GM12878 (cell line): ENCODE measurements at regions of chr10 and their contacts with region 1.

Region 1: DNA sequence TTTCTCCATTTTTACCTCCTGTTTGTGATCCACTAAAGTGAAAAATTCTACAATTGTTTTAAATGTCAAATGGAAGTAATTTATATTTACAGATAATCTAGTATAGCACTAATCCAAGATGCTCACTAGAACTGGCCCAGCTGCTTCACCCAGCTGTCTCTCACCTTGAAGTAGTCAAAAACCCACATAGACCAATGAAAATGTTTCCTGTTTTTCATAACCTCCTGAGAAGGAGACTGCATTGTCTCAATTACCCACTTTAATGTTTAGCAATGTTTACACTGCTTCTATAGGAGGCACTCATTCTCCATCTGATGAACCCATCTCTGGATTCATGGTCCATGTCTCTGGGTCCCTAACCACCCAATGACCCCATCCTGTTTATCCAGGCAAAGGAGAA is 56.1 kb upstream of the ADO start:
- DNase-seq: no peak
- ATAC-seq: peak; percentile 45
- H3K4me3 ChIP-seq: no peak overlapping the region
- H3K27ac ChIP-seq: no peak overlapping the region
- H3K4me1 ChIP-seq: peaks cover 13% of the 10 kb centered on the region; the same call in 1 of the 2 replicates
- H3K27me3 ChIP-seq: no peaks in the 10 kb centered on the region
- CTCF ChIP-seq: no peak
- EP300 ChIP-seq: no peak
- POLR2A ChIP-seq: no peak
- RAD21 ChIP-seq: peak; percentile 37; the same call in 1 of the 2 replicates

Region 2: DNA sequence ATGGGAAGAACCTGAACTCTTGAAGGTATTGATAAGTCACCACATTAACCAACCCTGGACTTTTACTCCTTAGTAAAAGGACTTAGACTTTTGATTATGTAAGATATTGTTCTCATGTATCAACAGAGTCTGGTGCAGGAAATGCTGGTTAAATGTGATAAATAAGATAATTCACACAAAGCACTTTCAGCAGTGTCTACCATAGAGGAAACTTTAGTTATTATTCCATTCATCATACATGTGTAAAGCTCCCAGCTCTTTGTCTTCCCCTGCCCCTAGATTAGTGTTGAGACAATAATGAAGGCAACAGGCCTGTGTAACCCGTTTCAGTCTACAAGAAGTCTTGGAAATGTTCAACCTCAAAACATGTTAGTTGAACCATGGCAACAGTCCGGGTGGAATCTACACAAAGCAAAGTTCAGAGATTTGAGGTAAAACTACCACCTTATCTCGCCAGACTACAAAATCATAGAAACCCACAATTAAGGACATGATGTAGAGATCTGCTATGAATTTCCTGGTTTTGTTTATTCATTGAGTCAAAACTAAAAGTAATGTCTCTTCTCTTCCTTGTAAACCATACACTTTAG is 53.8 kb before region 1 on chr10:
- CTCF ChIA-PET with region 1: no interaction called
- POLR2A ChIA-PET with region 1: no interaction called
- RAD21 ChIA-PET with region 1: no interaction called
- SMC1A ChIA-PET with region 1: no interaction called
- in situ Hi-C with region 1: no loop called
- intact Hi-C with region 1: no loop called
- DNase-seq: no peak
- ATAC-seq: no peak
- H3K4me3 ChIP-seq: no peak overlapping the region
- H3K27ac ChIP-seq: no peak overlapping the region
- H3K4me1 ChIP-seq: peaks cover 23% of the 10 kb centered on the region
- H3K27me3 ChIP-seq: no peaks in the 10 kb centered on the region
- CTCF ChIP-seq: no peak
- EP300 ChIP-seq: no peak
- POLR2A ChIP-seq: no peak
- RAD21 ChIP-seq: no peak

Region 3: GRCh38 chr10:62760401-62760800 is 12.0 kb after region 1 on chr10:
- CTCF ChIA-PET with region 1: interaction called, 14 read pairs
- POLR2A ChIA-PET with region 1: interaction called, 6 read pairs
- RAD21 ChIA-PET with region 1: interaction called, 8 read pairs
- SMC1A ChIA-PET with region 1: interaction called, 16 read pairs
- in situ Hi-C with region 1: no loop called
- intact Hi-C with region 1: no loop called
- DNase-seq: no peak
- ATAC-seq: no peak
- H3K4me3 ChIP-seq: no peak overlapping the region
- H3K27ac ChIP-seq: no peak overlapping the region
- H3K4me1 ChIP-seq: peaks cover 10% of the 10 kb centered on the region
- H3K27me3 ChIP-seq: no peaks in the 10 kb centered on the region
- CTCF ChIP-seq: no peak
- EP300 ChIP-seq: no peak
- POLR2A ChIP-seq: no peak
- RAD21 ChIP-seq: no peak